ENCODE measurements at regions of chr16 and their contacts with region 1.

Region 1: GRCh38 chr16:4548124-4548523 is 8.0 kb upstream of the C16orf96 start:
- DNase-seq: no peak
- H3K4me3 Mint-ChIP-seq: no peak overlapping the region
- H3K27ac Mint-ChIP-seq: no peak overlapping the region
- H3K4me1 Mint-ChIP-seq: peaks cover 5% of the 10 kb centered on the region
- H3K27me3 Mint-ChIP-seq: peaks cover 5% of the 10 kb centered on the region

Region 2: DNA sequence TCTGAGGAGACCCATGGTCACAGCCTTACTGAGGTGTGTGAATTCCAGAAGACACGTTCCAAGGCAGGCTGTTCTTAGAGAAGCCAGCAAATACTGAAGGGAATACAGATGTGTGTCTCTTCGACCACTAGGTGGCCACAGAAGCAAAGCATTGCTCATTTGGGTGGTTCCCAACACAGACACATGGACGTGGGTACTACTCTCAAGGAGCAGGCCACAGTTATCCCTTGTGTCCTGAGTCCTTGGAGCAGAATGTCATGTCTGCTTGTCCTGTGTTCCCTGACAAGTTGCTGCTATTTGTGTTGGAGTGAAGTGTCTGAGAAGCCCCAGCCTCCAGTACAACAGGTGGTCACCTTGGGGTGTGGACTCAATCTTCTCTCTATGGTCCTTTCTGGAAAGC is 41.7 kb before region 1 on chr16:
- intact Hi-C with region 1: loop called (anchors 1 kb)
- DNase-seq: peak; percentile 48
- H3K4me3 Mint-ChIP-seq: peak overlapping the region; percentile 22
- H3K27ac Mint-ChIP-seq: peak overlapping the region; percentile 85
- H3K4me1 Mint-ChIP-seq: peaks cover 47% of the 10 kb centered on the region
- H3K27me3 Mint-ChIP-seq: no peaks in the 10 kb centered on the region

Region 3: DNA sequence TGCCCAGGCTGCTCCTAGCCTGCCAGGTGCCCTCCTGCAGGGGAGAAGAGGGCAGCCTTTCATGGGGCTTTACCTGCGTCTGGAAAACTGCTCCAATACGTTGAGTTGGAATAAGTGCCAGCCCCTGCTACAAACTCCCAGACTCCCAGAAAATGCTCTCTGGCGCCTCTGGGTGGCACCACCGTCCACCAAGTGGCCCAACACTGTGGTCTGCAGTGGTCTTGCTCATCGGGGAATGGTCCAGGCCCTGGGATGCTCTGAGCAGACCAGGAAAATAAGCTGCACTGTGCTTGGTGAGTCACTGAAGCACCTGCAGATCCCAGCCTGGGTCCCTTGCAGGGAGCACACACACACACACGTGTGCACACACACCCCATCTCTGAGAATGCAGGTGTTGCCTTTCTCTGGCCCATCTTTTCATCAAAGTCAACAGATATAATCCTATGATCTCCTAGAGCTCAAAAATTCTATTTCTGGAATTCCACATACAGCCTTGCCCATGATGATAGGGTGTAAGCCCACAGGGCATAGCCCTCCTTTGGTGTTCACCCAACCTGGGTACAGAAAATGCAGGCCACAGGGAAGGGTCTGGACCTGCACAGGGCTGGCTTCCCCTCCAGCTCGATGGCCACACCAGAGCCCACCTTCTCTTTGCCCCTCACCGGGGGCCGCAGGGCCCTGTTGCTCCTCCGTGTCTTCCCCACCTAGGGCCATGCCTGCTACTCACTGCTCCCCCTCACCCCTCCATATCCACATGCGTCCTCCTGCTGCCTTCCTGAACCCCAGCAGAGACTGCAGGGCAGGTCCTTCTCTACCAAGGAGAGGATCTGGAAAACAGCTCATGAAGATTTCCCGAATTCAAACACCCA is 30.1 kb before region 1 on chr16:
- intact Hi-C with region 1: loop called (anchors 1 kb)
- DNase-seq: no peak
- H3K4me3 Mint-ChIP-seq: no peak overlapping the region
- H3K27ac Mint-ChIP-seq: no peak overlapping the region
- H3K4me1 Mint-ChIP-seq: peaks cover 30% of the 10 kb centered on the region
- H3K27me3 Mint-ChIP-seq: no peaks in the 10 kb centered on the region

Measured in activated T-helper 2 cell treated with anti-CD3 and anti-CD28 coated beads, Interferon-gamma antibody, Interleukin-2, Interleukin-4, amounts not matched to agents 10 μg/mL and 5 μg/mL and 100 μg/mL, durations not matched to agents 14 hours and 24 hours and 36 hours (primary cell).